Activated CD4-positive, alpha-beta memory T cell treated with anti-CD3 and anti-CD28 coated beads for 36 hours (primary cell): ENCODE measurements at regions of chr17 and their contacts with region 1.

Region 1: GRCh38 chr17:29133146-29133713 is 47.0 kb downstream of the MYO18A start:
- DNase-seq: peak; percentile 29
- H3K4me3 Mint-ChIP-seq: no peak overlapping the region
- H3K27ac Mint-ChIP-seq: peak overlapping the region; percentile 45
- H3K4me1 Mint-ChIP-seq: peaks cover 63% of the 10 kb centered on the region
- H3K27me3 Mint-ChIP-seq: no peaks in the 10 kb centered on the region

Region 2: GRCh38 chr17:28959471-28959871 is 173.8 kb before region 1 on chr17:
- CTCF ChIA-PET with region 1: no interaction called
- POLR2A ChIA-PET with region 1: no interaction called
- intact Hi-C with region 1: no loop called
- DNase-seq: no peak
- H3K4me3 Mint-ChIP-seq: no peak overlapping the region
- H3K27ac Mint-ChIP-seq: no peak overlapping the region
- H3K4me1 Mint-ChIP-seq: no peaks in the 10 kb centered on the region
- H3K27me3 Mint-ChIP-seq: peaks cover 17% of the 10 kb centered on the region

Region 3: GRCh38 chr17:29111816-29112499 is 21.3 kb before region 1 on chr17:
- CTCF ChIA-PET with region 1: interaction called, 216 read pairs
- POLR2A ChIA-PET with region 1: interaction called, 4 read pairs
- intact Hi-C with region 1: no loop called
- DNase-seq: peak; percentile 80
- H3K4me3 Mint-ChIP-seq: no peak overlapping the region
- H3K27ac Mint-ChIP-seq: no peak overlapping the region
- H3K4me1 Mint-ChIP-seq: peaks cover 2% of the 10 kb centered on the region
- H3K27me3 Mint-ChIP-seq: no peaks in the 10 kb centered on the region